H1 (cell line): ENCODE measurements at regions of chr9 and their contacts with region 1.

Region 1: DNA sequence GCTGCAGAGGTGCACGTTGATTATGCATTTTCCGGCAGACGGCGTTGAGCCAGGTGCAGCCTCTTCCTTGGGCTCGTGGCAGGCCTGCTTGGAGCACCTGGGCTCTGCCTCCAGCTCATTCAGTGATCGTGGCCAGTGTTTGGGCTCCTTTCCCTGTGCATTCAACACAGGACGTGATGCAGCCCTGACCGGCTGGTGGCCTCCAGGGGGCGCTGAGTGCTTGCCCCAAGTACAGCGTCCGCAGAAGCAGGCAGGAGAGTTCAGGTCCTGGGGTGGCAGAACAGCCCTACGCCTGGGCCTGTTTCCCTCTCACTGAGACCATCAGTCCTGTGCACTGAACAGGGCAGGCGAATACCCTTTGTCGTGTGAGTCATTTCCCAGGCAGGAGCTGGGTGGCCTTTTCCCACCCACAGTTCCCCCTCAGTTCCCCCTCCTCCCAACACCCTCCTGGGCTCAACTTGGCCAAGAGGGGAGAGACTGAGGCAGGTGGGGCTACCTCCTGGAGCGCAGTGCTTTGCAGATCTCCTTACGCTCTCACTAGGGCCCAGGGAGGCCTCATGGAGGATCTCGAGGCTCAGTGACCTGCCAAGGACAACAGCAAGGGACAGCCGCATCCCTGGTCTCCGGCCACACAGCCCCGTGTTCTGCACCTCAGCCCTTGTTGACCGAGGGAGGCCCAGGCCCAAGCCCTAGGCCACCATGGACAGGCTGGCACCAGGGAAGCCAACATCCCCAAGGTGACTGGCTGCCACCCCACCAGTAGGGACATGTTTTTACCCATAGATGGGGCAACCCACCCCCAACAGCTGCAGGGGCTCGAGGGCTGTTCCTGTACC is 52.9 kb downstream of the LRSAM1 start:
- DNase-seq: peak; percentile 88 to 92
- H3K4me3 ChIP-seq: no peak overlapping the region
- H3K27ac ChIP-seq: 0 out of 2 replicates have a peak overlapping the region, but pooled peaks have one; percentile 45
- H3K4me1 ChIP-seq: peaks cover 0 to 3% (median 0%) of the 10 kb centered on the region in 4 experiments; a peak in 2 of 7 replicates
- H3K27me3 ChIP-seq: no peaks in the 10 kb centered on the region
- CTCF ChIP-seq: peak in 2 of 3 experiments; percentile 98 to 99; a peak in 3 of 4 replicates
- EP300 ChIP-seq: no peak
- POLR2A ChIP-seq: no peak
- RAD21 ChIP-seq: peak; percentile 93 to 96

Region 2: DNA sequence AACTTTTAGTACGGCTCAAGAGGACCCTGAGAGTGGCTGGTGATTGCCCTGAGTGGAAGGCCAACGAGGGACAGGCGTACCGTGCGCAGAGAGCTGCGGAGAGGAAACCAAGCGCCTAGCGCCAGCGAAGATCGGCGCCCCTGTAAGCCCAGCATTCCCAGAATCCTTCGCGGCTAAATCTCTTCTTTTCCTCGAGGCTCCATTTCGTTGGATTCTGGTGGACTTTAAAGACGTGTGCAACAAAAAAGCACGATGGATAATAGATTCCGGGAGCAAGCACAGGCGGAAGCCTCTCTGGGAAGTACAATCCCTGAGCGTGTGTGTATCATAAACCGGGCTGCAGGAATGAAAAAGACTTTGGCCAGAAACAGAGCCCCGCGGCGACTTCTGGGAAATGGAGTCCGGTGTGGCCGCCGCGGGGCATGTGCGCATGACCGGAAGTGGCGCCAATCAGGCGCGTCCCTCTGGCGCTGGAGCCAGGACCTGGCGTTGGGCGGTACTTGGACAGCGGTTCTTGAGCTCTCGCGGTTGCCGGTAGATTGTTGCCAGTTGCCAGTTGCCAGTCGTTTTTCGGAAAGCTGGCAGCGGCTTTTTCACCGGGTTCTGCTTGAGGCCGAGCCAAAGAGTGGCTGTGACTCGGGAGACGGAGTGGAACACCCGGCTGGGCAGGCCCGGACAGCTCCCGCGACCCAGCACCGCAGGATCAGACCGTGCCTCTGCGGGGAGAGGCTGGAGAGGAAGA is 80.1 kb before region 1 on chr9 and contains the start of gene ZNF79:
- CTCF ChIA-PET with region 1: no interaction called
- POLR2A ChIA-PET with region 1: no interaction called
- DNase-seq: peak; percentile 82 to 95
- H3K4me3 ChIP-seq: peak within 1 kb of the TSS; percentile 87 to 96 (median 94)
- H3K27ac ChIP-seq: peak within 1 kb of the TSS; percentile 94
- H3K4me1 ChIP-seq: peaks cover 0 to 12% (median 6%) of the 10 kb centered on the region in 4 experiments; a peak in 5 of 7 replicates
- H3K27me3 ChIP-seq: no peaks in the 10 kb centered on the region
- CTCF ChIP-seq: no peak
- EP300 ChIP-seq: no peak
- POLR2A ChIP-seq: peak; percentile 80 to 92
- RAD21 ChIP-seq: no peak
- total RNA-seq, gene ZNF79: 7.4 and 7.6 TPM in 2 replicates

Region 3: DNA sequence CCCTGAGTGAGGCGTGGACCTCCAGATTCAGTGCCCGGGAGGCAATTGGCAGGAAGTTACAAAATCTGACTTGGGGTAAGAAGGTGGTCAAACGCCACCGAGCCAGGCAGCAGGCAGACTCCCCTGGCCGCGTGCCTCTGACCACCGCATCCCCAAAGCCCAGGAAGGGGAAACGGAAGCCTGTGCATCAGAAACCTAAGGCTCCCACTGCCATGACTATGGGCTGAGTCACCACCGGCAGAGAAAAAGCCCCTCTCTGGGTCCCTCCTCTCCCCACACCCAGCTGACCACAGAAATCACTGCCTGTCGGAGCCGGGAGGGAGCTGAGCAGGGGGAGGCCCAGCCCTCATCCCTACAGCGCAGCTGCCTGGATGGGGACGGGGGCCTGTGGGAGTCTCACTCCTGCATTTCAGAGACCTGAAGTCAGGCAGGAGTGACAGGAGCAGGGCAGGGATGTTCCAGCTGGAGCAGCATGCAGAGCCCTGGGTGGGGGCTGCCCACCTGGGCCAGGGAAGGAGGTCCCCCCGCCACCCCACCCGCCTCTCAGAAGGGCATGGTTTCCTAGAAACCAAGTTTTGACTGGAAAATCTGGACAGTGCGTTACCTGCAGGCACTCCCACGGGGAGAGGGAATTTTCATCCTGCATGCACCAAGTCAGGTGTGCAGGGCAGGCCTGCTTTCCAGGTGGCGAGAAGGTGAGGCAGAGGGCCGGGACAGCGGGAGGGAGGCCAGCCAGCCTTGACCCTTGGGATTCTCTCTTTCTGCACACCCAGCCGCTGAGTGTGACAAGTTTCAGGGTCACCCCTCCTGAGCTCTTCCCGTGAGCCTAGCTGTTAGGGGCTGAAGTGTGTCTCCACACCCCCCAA is 15.4 kb after region 1 on chr9:
- CTCF ChIA-PET with region 1: interaction called, 88 read pairs
- POLR2A ChIA-PET with region 1: no interaction called
- DNase-seq: no peak
- H3K4me3 ChIP-seq: no peak overlapping the region
- H3K27ac ChIP-seq: no peak overlapping the region
- H3K4me1 ChIP-seq: peaks cover 2 to 7% (median 5%) of the 10 kb centered on the region in 4 experiments; a peak in 5 of 7 replicates
- H3K27me3 ChIP-seq: no peaks in the 10 kb centered on the region
- CTCF ChIP-seq: no peak
- EP300 ChIP-seq: no peak
- POLR2A ChIP-seq: no peak
- RAD21 ChIP-seq: no peak

Region 4: DNA sequence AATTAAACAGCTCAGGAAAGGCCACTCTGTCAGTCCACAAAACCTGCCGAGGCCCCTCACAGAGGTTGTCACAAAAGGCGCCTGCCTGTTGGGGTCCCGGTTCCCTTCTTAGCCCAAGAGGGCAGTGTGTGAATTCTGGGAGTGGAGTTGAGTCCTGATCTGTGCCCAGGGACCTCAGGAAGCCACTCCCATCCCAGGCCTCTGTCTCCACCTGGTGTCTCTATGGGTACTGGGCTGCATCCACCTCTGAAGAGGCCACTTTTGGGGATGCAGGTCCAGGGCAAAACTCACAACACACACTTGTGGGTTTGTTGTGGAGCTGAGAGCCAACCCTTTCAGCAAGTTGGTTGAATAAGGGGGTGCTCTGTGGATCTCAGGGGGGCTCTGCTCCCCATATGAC is 33.6 kb after region 1 on chr9:
- CTCF ChIA-PET with region 1: interaction called, 80 read pairs
- POLR2A ChIA-PET with region 1: interaction called, 4 read pairs
- DNase-seq: no peak
- H3K4me3 ChIP-seq: no peak overlapping the region
- H3K27ac ChIP-seq: no peak overlapping the region
- H3K4me1 ChIP-seq: peaks cover 4 to 13% (median 10%) of the 10 kb centered on the region in 4 experiments; a peak in 5 of 7 replicates
- H3K27me3 ChIP-seq: no peaks in the 10 kb centered on the region
- CTCF ChIP-seq: peak in 2 of 3 experiments; percentile 65 to 80; a peak in 3 of 4 replicates
- EP300 ChIP-seq: no peak
- POLR2A ChIP-seq: no peak
- RAD21 ChIP-seq: peak; percentile 71 to 81

Region 5: DNA sequence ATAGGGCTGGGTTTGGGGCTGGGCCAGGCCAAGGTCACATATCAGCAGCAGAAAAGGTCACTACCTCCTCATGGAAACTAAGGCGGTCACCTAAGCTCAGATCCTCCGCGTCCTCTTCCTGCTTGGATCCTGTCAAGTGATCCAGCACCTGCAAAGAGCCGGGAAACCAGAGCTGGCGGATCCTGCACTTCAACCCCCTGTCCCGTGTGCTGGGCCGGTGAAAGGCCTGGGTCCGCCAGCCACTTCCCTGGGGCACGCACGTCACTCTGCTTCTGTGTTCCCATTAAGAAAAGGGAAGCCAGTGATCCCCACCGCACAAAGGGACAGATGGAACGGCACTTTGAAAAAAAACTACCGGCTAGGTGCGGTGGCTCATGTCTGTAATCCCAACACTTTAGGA is 46.6 kb after region 1 on chr9:
- CTCF ChIA-PET with region 1: interaction called, 13 read pairs
- POLR2A ChIA-PET with region 1: no interaction called
- DNase-seq: no peak
- H3K4me3 ChIP-seq: no peak overlapping the region
- H3K27ac ChIP-seq: no peak overlapping the region
- H3K4me1 ChIP-seq: peaks cover 0 to 19% (median 5%) of the 10 kb centered on the region in 4 experiments; a peak in 6 of 7 replicates
- H3K27me3 ChIP-seq: no peaks in the 10 kb centered on the region
- CTCF ChIP-seq: no peak
- EP300 ChIP-seq: no peak
- POLR2A ChIP-seq: no peak
- RAD21 ChIP-seq: no peak

Region 6: DNA sequence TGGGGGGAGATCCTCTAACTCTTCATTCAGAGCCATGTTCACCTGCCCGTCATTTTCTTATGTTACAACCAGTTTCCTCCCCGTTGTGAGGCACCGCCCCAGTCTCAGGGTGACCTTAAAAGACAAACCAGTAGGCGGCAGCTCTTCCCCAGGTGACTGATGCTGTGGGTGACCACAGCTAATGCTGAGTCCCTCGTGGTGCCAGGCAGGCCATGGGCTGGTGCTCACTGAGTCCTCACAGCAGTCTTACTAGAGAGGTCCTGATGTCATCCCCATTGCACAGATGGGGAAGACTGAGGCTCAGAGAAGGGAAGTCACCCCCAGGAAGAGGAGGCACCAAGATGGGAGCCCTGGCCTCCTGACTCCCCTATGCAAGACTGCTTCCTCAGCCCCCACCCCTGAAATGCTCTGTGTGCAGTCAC is 203.6 kb after region 1 on chr9:
- CTCF ChIA-PET with region 1: interaction called, 10 read pairs
- POLR2A ChIA-PET with region 1: no interaction called
- DNase-seq: no peak
- H3K4me3 ChIP-seq: no peak overlapping the region
- H3K27ac ChIP-seq: no peak overlapping the region
- H3K4me1 ChIP-seq: peaks cover 0 to 27% (median 18%) of the 10 kb centered on the region in 4 experiments; a peak in 6 of 7 replicates
- H3K27me3 ChIP-seq: no peaks in the 10 kb centered on the region; a peak in 2 of 7 replicates
- CTCF ChIP-seq: peak in 1 of 3 experiments; percentile 41; a peak in 2 of 4 replicates
- EP300 ChIP-seq: no peak
- POLR2A ChIP-seq: no peak
- RAD21 ChIP-seq: peak; percentile 35 to 54; a peak in 2 of 4 replicates